GM10248 (cell line): ENCODE measurements at regions of chr5 and their contacts with region 1.

Region 1: GRCh38 chr5:33272288-33272687 is 168.5 kb upstream of the TARS1 start:
- DNase-seq: no peak
- CTCF ChIP-seq: no peak

Region 2: DNA sequence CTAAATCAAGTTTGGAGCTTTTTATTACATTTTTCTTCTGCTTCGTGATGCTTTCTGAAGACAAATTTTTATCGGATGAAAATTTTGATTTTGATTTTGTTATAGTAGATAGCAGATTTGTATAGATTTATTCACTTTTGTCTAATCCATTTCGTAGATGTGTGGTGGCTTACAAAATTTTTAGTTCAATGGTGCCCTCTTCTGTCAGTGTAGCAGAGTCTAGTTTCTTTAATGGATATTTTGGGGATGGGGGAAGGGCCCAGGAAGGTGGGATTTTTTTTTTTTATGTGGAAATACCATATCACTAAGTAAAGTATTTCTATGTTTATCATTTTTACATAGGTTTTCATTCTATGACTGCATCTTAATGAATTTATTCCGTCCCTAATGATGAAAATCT is 91.4 kb before region 1 on chr5:
- CTCF ChIA-PET with region 1: no interaction called
- POLR2A ChIA-PET with region 1: no interaction called
- DNase-seq: no peak
- CTCF ChIP-seq: no peak

Region 3: GRCh38 chr5:33242277-33242676 is 30.0 kb before region 1 on chr5:
- CTCF ChIA-PET with region 1: no interaction called
- POLR2A ChIA-PET with region 1: interaction called, 12 read pairs
- DNase-seq: no peak
- CTCF ChIP-seq: no peak